ENCODE measurements at regions of chr2 and their contacts with region 1.

Region 1: GRCh38 chr2:10629819-10630532 is 59.8 kb downstream of the NOL10 start:
- DNase-seq: no peak
- H3K4me3 Mint-ChIP-seq: no peak overlapping the region
- H3K27ac Mint-ChIP-seq: no peak overlapping the region
- H3K4me1 Mint-ChIP-seq: no peaks in the 10 kb centered on the region
- H3K27me3 Mint-ChIP-seq: no peaks in the 10 kb centered on the region
- CTCF ChIP-seq: no peak

Region 2: GRCh38 chr2:10619643-10620042 is 10.3 kb before region 1 on chr2:
- CTCF ChIA-PET with region 1: interaction called, 3 read pairs
- POLR2A ChIA-PET with region 1: interaction called, 12 read pairs
- intact Hi-C with region 1: no loop called
- DNase-seq: no peak
- H3K4me3 Mint-ChIP-seq: no peak overlapping the region
- H3K27ac Mint-ChIP-seq: no peak overlapping the region
- H3K4me1 Mint-ChIP-seq: peaks cover 6% of the 10 kb centered on the region
- H3K27me3 Mint-ChIP-seq: no peaks in the 10 kb centered on the region
- CTCF ChIP-seq: no peak